RWPE1 (cell line): ENCODE measurements at regions of chr5 and their contacts with region 1.

Region 1: DNA sequence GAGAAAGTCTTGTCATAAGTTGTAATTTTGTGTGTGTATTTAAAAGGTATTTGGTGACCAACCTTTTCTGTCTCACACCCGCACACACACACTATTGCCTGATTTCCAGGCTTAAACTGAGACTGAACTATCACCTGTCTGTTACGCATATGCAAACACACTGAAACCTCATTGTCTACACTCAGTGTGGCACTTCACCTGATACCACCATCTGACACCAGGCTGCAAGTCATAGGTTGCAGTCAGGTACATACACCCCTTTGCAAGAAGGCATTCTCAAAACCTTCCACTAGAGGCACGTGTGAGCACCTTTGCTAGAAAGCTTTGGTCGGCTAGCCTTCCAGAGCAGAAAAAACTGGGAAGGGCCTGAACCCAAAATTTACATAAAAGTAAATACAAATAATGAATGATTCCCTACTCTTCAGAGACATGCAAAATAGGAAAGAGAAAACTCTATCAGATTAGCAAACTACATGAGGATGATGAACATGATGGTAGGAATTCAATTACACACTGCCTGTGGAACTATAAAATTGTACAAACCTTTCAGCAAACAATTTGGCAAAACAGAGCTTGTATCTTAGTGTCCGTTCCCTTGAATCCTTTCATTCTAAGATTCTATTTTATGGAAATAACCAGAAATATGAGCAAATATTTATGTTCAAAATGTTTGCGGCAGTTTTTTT is 5.9 kb upstream of the FOXD1 start:
- DNase-seq: peak; percentile 67
- H3K27ac ChIP-seq: no peak overlapping the region
- CTCF ChIP-seq: peak; percentile 97

Region 2: DNA sequence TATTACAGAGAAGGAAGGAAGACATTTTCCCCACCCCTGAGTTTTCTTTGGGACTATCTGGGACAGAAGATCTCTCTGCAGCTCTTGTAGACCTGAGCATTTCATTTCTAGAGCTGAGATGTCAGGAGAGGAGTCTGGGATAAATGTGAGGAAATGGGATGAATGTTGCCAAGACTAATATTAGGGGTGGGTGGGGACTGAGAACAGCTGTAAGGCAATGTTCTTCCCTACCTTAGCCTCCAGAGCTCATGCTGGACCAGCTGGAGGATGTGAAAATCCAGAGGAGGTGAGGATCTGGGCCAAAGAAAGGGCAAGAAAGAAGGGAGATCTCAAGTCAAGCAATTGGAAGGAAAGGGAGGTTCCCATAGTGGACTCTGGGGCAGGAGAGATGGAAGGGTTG is 17.2 kb after region 1 on chr5:
- CTCF ChIA-PET with region 1: interaction called, 20 read pairs
- POLR2A ChIA-PET with region 1: no interaction called
- DNase-seq: no peak
- H3K27ac ChIP-seq: no peak overlapping the region
- CTCF ChIP-seq: no peak